WTC11 (cell line): ENCODE measurements at regions of chr9 and their contacts with region 1.

Region 1: DNA sequence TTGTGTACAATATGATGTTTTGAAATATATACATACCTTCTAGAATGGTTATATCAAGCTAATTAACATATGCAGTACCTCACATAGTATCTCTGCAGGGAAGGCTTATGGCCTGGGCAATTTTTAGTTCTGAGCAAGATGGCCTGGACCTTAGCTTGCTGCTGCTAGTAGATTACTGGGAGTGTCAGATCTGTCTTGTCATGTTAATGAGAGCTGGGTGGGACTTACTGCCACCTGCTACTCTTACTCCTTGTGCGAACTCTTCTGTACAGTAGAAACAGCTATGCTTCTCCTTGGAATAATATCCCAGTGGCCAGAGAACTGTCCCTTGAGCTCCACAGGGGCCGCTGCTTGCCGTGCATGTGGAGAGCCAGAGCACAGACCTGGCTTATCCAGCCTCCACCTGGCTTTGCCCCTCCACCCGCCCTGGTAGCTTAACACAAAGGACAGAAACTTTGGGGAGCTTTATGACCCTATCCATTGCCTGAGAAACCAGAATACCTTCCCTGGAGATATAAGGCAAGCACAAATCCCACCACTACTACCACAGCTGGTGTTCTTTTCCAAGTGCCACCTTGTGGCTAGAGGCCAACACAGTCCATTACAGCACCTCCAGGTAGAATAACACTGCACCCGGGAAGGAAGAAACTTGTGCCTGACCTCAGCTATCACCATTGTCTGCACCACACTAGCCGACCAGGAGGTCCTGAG is 74.4 kb upstream of the RUSC2 start:
- DNase-seq: peak; percentile 23
- ATAC-seq: peak; percentile 98
- H3K4me3 Mint-ChIP-seq: no peak overlapping the region
- H3K27ac Mint-ChIP-seq: no peak overlapping the region
- H3K4me1 Mint-ChIP-seq: peaks cover 15% of the 10 kb centered on the region
- H3K27me3 Mint-ChIP-seq: peaks cover 1% of the 10 kb centered on the region
- CTCF ChIP-seq: no peak

Region 2: DNA sequence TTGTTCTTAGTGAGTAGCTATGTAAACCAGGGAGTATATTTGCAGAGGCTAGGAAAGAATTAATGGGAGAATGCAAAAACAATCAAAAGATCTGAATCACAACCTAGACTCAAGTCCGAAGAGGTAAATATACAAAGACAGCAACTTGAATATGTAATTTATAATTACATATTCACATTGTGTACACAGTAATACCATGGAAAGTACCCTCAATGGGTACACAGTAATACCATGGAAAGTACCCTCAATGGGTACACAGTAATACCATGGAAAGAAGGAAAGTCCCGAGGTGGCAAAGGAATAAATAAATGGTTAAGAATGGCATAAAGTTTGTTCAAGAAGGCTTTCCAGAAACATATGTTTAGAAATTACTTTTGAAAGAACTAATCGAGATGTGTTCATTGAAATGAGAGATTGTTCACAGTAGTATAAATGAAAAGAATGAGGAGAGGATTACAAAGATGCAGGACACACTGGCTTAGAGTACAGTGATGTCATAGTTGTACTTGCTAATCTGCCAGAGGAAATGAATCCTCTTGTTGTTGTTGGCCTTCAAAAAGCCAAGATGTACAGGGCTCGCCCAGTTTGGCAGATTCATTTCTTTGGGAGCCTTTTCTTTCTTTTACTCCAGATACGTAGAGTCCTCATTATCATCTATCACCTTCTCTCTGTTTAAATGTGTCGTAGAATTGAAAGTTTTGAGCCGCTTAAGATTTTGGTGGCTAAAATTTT is 137.7 kb before region 1 on chr9:
- CTCF ChIA-PET with region 1: interaction called, 17 read pairs
- POLR2A ChIA-PET with region 1: no interaction called
- DNase-seq: no peak
- ATAC-seq: no peak
- H3K4me3 Mint-ChIP-seq: no peak overlapping the region
- H3K27ac Mint-ChIP-seq: no peak overlapping the region
- H3K4me1 Mint-ChIP-seq: no peaks in the 10 kb centered on the region
- H3K27me3 Mint-ChIP-seq: no peaks in the 10 kb centered on the region; the same call in 1 of the 2 replicates
- CTCF ChIP-seq: no peak

Region 3: GRCh38 chr9:35324966-35325365 is 90.6 kb before region 1 on chr9:
- CTCF ChIA-PET with region 1: no interaction called
- POLR2A ChIA-PET with region 1: no interaction called
- DNase-seq: no peak
- ATAC-seq: no peak
- H3K4me3 Mint-ChIP-seq: no peak overlapping the region
- H3K27ac Mint-ChIP-seq: no peak overlapping the region
- H3K4me1 Mint-ChIP-seq: peaks cover 5% of the 10 kb centered on the region; the same call in 1 of the 2 replicates
- H3K27me3 Mint-ChIP-seq: no peaks in the 10 kb centered on the region
- CTCF ChIP-seq: no peak